ENCODE measurements at regions of chr1 and their contacts with region 1.

Region 1: GRCh38 chr1:175154629-175155472 is 37.7 kb downstream of the KIAA0040 start:
- DNase-seq: peak; percentile 72
- H3K4me3 ChIP-seq: no peak overlapping the region
- H3K27ac ChIP-seq: no peak overlapping the region
- H3K4me1 ChIP-seq: no peaks in the 10 kb centered on the region
- H3K27me3 ChIP-seq: peaks cover 0 to 20% of the 10 kb centered on the region in 2 experiments
- CTCF ChIP-seq: peak; percentile 78 to 80
- POLR2A ChIP-seq: no peak

Region 2: DNA sequence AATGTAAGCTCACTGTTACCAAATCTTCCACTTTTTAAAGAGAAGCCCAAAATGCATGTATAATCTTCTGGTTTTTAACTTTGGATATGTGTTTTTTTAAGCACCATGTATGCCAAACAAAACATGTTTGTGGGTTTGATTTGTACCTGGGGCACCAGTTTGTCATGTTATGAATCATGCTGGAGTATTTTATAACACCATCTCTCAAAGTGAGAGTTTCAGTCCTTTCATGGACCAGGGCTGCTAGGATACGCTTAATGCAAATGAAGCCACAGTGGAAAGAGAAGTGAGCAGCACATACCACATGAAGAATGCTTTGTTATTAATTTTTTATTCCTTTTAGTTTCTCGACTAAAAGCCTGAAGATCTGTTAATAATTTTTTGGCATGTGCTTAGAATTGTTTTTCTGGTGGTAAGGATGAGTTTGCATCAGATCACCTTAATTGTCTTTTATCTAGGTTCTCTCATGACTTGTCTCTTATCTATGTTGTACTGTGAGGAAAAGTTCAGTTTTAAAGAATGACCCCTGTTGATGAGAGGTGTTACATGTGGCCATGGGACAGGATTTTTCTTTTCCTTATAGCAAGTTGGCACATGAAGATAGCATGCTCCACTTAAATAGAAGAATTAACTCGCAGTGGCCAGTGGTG is 997.6 kb before region 1 on chr1:
- CTCF ChIA-PET with region 1: no interaction called
- POLR2A ChIA-PET with region 1: no interaction called
- dilution Hi-C with region 1: no loop called
- intact Hi-C with region 1: no loop called
- DNase-seq: no peak
- H3K4me3 ChIP-seq: no peak overlapping the region
- H3K27ac ChIP-seq: no peak overlapping the region
- H3K4me1 ChIP-seq: peaks cover 8% of the 10 kb centered on the region
- H3K27me3 ChIP-seq: no peaks in the 10 kb centered on the region
- CTCF ChIP-seq: no peak
- POLR2A ChIP-seq: no peak

Region 3: DNA sequence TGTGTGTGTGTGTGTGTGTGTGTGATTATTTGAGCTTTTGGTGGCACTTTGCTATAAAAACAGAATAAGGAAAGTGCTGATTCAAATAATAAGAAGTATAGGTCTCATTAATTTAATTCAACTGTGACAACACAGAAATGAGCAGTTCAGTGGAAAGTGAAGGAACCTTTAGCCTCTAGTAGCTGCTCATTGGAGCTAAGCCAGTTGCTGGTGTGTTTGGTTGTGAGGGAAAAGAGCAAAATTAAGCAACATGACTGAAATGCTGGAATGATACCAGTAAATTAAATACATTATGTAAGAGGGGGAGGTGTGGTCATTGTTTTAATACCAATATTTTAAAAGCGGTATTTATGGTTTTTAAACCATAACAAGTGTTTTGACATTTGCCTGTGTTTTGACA is 17.5 kb before region 1 on chr1:
- CTCF ChIA-PET with region 1: interaction called, 24 read pairs
- POLR2A ChIA-PET with region 1: no interaction called
- dilution Hi-C with region 1: no loop called
- intact Hi-C with region 1: no loop called
- DNase-seq: no peak
- H3K4me3 ChIP-seq: no peak overlapping the region
- H3K27ac ChIP-seq: no peak overlapping the region
- H3K4me1 ChIP-seq: no peaks in the 10 kb centered on the region
- H3K27me3 ChIP-seq: peaks cover 2 to 5% of the 10 kb centered on the region in 2 experiments
- CTCF ChIP-seq: no peak
- POLR2A ChIP-seq: no peak

Region 4: DNA sequence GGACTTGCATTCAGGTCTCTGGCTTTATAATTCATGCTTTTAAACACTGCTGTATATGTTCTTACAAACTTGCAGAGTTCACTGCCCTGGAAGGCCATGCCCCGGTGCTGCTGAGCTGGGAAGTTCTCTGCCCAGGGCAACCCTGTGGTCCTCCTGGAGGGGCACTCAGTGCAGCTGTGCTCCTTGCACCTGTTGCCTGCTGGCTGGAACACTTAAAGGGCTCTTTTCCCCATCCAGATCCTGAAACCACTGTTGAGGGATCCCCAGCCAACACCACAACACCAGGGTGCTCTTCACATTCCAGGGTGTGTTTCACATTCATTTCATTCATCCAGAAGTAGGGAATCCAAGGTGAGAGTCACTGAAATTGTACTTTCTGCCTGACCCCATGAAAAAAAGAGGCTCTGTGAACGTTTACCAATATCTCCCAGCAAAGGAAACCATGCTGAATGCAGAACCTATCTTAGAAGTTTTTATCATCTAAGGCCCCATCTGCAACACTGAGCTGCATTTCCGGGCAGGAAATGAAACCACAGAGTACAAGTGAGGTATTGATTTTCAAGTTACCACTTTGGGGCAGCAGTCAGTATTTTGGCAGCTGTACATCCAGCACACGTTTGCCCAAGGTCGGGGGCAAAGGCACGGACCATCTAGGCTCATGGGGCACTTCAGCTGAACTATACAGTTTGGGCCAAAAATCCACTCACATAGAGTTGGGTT is 54.1 kb after region 1 on chr1:
- CTCF ChIA-PET with region 1: interaction called, 12 read pairs
- POLR2A ChIA-PET with region 1: no interaction called
- dilution Hi-C with region 1: no loop called
- intact Hi-C with region 1: no loop called
- DNase-seq: no peak
- H3K4me3 ChIP-seq: no peak overlapping the region
- H3K27ac ChIP-seq: no peak overlapping the region
- H3K4me1 ChIP-seq: no peaks in the 10 kb centered on the region
- H3K27me3 ChIP-seq: peaks cover 0 to 2% of the 10 kb centered on the region in 2 experiments
- CTCF ChIP-seq: no peak
- POLR2A ChIP-seq: no peak

Region 5: GRCh38 chr1:175309996-175310395 is 155.1 kb after region 1 on chr1:
- CTCF ChIA-PET with region 1: interaction called, 369 read pairs
- POLR2A ChIA-PET with region 1: no interaction called
- dilution Hi-C with region 1: loop called (anchors 10 kb)
- intact Hi-C with region 1: no loop called
- DNase-seq: no peak
- H3K4me3 ChIP-seq: no peak overlapping the region
- H3K27ac ChIP-seq: no peak overlapping the region
- H3K4me1 ChIP-seq: peaks cover 11% of the 10 kb centered on the region
- H3K27me3 ChIP-seq: peaks cover 2 to 10% of the 10 kb centered on the region in 2 experiments
- CTCF ChIP-seq: no peak
- POLR2A ChIP-seq: no peak

Region 6: GRCh38 chr1:175338387-175339135 is 183.7 kb after region 1 on chr1:
- CTCF ChIA-PET with region 1: interaction called, 10 read pairs
- POLR2A ChIA-PET with region 1: no interaction called
- dilution Hi-C with region 1: no loop called
- intact Hi-C with region 1: no loop called
- DNase-seq: peak; percentile 10
- H3K4me3 ChIP-seq: no peak overlapping the region
- H3K27ac ChIP-seq: no peak overlapping the region
- H3K4me1 ChIP-seq: no peaks in the 10 kb centered on the region
- H3K27me3 ChIP-seq: peaks cover 0 to 15% of the 10 kb centered on the region in 2 experiments
- CTCF ChIP-seq: peak; percentile 54 to 61
- POLR2A ChIP-seq: no peak

Region 7: GRCh38 chr1:175742790-175743459 is 588.1 kb after region 1 on chr1:
- CTCF ChIA-PET with region 1: interaction called, 11 read pairs
- POLR2A ChIA-PET with region 1: no interaction called
- dilution Hi-C with region 1: no loop called
- intact Hi-C with region 1: loop called (anchors 5 kb)
- DNase-seq: peak; percentile 55
- H3K4me3 ChIP-seq: no peak overlapping the region
- H3K27ac ChIP-seq: no peak overlapping the region
- H3K4me1 ChIP-seq: no peaks in the 10 kb centered on the region
- H3K27me3 ChIP-seq: peaks cover 2 to 5% of the 10 kb centered on the region in 2 experiments
- CTCF ChIP-seq: no peak
- POLR2A ChIP-seq: no peak

Region 8: GRCh38 chr1:176073524-176074157 is 918.8 kb after region 1 on chr1:
- CTCF ChIA-PET with region 1: interaction called, 17 read pairs
- POLR2A ChIA-PET with region 1: no interaction called
- dilution Hi-C with region 1: no loop called
- intact Hi-C with region 1: loop called (anchors 1 kb)
- DNase-seq: peak; percentile 78
- H3K4me3 ChIP-seq: no peak overlapping the region
- H3K27ac ChIP-seq: no peak overlapping the region
- H3K4me1 ChIP-seq: no peaks in the 10 kb centered on the region
- H3K27me3 ChIP-seq: no peaks in the 10 kb centered on the region
- CTCF ChIP-seq: peak; percentile 52 to 56
- POLR2A ChIP-seq: no peak